ENCODE measurements at regions of chr5 and their contacts with region 1.

Region 1: DNA sequence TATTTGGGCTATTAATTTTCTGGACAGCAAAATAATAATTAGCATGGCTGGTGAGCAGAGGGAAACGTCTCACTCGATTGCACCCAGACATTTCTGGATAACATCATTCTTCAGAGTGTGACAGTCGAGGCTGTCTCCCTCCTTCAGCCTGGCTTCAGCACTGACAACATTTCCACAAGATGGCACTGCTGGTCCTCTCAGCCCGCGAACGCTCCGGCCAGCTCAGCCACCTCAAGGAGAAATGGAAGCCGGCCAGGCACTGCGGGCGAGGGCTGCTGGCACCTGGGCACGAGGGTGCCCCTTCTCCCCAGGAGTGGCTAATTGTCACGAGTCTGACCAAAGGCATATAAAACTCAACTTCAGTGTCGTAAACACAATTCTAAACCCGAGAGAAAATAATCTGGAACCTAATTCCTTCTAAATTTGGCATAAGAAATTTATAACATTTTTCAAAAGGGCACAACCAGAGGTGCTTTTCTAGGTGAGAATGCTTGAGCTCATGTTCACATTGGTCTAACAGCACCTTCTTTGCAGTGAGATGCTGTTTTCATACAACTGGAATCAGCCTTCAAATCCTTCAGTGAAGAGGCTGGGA is 65.9 kb downstream of the DAP start:
- DNase-seq: peak; percentile 81 to 89
- ATAC-seq: peak; percentile 74
- H3K4me3 ChIP-seq: no peak overlapping the region
- H3K27ac ChIP-seq: no peak overlapping the region
- H3K4me1 ChIP-seq: no peaks in the 10 kb centered on the region
- H3K27me3 ChIP-seq: no peaks in the 10 kb centered on the region

Region 2: DNA sequence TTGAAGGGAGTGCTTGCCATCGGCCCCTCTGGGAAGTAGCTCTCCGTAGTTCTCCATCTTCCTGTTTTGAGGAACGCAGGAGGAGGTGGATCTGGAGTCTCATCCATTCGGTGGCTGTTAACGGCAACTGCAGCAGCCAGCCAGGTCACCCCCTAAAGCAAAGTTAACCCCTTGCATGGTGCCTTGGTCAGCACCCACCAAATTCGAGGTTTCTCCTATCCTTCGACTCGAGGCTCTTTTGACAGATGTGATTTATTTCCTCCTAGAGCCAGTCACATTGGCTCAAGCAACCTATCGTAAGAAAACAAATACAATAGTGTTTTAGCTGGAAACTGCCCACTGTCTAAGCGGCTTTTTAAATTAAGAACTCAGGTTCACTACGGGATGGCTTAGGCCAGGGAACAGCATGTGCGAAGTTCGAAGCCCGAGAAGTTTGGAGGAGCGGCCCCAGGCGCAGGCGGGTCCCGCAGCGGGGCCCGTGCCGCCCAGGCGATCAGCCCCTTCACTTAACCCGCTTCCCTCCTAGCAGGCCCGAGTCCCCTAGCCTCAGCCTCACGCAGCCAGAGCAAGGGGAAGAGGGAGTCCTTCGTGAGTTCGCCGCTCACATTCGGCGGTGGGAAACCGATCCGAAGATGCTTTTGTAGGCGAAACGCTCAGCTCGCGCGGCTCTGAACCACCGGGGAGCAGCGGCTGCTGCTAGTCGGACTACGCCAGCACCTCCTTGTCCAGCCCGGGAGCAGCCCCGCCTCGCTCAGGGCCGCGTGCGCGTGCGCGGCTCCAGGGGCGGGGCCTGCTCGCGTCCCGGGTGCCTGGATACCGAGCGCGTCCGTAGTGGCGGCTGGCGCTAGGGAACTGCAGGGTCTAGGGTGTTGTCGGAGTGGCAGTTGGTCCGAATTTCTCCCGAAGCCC is 253.8 kb before region 1 on chr5 and contains the start of gene ROPN1L:
- intact Hi-C with region 1: no loop called
- DNase-seq: peak; percentile 92 to 95
- ATAC-seq: peak; percentile 99
- H3K4me3 ChIP-seq: peak within 1 kb of the TSS; percentile 8 to 17
- H3K27ac ChIP-seq: peak within 1 kb of the TSS in 1 of 2 donors; percentile 29
- H3K4me1 ChIP-seq: no peaks in the 10 kb centered on the region
- H3K27me3 ChIP-seq: no peaks in the 10 kb centered on the region
- total RNA-seq, gene ROPN1L: 0.68 TPM in 1 of 2 donors, not detected in the other

Region 3: GRCh38 chr5:11182441-11183268 is 487.5 kb after region 1 on chr5:
- intact Hi-C with region 1: loop called (anchors 10 kb)
- DNase-seq: no peak
- ATAC-seq: no peak
- H3K4me3 ChIP-seq: no peak overlapping the region
- H3K27ac ChIP-seq: no peak overlapping the region
- H3K4me1 ChIP-seq: no peaks in the 10 kb centered on the region
- H3K27me3 ChIP-seq: peaks cover 0 to 2% of the 10 kb centered on the region in 2 donors